ENCODE measurements at regions of chr5 and their contacts with region 1.

Region 1: DNA sequence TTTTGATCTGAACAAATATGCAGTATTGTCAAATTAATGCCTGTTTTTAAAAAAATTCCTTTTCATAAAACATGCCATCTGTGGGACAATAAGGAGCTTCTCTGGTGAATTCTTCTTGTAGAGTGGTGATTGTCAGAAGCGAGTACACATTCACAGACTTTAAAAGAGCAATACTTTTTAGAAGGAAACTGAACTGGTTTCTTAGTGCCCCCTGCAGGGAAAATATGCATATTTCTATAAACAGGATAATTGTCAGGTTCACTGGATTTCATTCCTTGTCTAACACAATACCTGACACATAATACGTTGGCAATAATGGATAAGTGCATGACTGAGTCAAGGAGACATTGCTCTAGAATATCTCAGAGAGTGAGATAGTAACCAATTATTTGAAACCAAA is 133.7 kb downstream of the KIF4B start:
- DNase-seq: no peak
- ATAC-seq: no peak
- H3K4me3 ChIP-seq: no peak overlapping the region
- H3K27ac ChIP-seq: no peak overlapping the region
- H3K4me1 ChIP-seq: no peaks in the 10 kb centered on the region
- H3K27me3 ChIP-seq: no peaks in the 10 kb centered on the region
- CTCF ChIP-seq: peak in 1 of 5 experiments; percentile 14
- POLR2A ChIP-seq: no peak

Region 2: DNA sequence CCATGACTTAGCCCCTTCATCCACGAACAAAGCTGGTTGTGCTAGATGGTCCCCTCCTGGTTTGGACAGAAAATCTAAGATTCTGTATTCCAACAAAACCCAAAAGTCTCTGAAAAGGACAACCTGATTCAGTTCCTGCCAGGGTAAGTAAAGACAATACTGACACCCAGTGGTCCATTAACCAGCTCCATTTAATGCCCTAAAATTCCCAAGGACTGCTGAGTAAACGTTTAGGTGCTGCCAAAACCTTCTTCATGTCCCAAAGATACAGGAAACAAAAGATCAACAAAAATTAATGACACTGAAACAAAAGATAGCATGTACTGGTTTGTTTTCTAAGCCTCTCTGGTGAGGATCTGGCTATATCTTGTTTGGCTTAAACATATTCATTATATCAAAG is 1677.6 kb after region 1 on chr5:
- in situ Hi-C with region 1: loop called in 1 of 4 experiments (anchors 25 kb)
- intact Hi-C with region 1: no loop called
- DNase-seq: no peak
- ATAC-seq: peak in 1 of 2 donors; percentile 78
- H3K4me3 ChIP-seq: no peak overlapping the region
- H3K27ac ChIP-seq: no peak overlapping the region
- H3K4me1 ChIP-seq: no peaks in the 10 kb centered on the region
- H3K27me3 ChIP-seq: no peaks in the 10 kb centered on the region
- CTCF ChIP-seq: peak; percentile 33 to 50 (median 39)
- POLR2A ChIP-seq: no peak